Activated naive CD4-positive, alpha-beta T cell treated with anti-CD3 and anti-CD28 coated beads for 36 hours (primary cell): ENCODE measurements at regions of chr20 and their contacts with region 1.

Region 1: GRCh38 chr20:21125849-21126580 is at the start of gene KIZ:
- DNase-seq: peak; percentile 97
- H3K4me3 Mint-ChIP-seq: peak within 1 kb of the TSS; percentile 86
- H3K27ac Mint-ChIP-seq: peak within 1 kb of the TSS; percentile 73
- H3K4me1 Mint-ChIP-seq: peaks cover 14% of the 10 kb centered on the region
- H3K27me3 Mint-ChIP-seq: no peaks in the 10 kb centered on the region
- total RNA-seq, gene KIZ: 11.3 to 13.0 TPM

Region 2: GRCh38 chr20:20017001-20017843 is 1108.8 kb before region 1 on chr20 and contains the start of gene NAA20:
- CTCF ChIA-PET with region 1: no interaction called
- intact Hi-C with region 1: loop called (anchors 1 kb)
- DNase-seq: peak; percentile 93
- H3K4me3 Mint-ChIP-seq: peak within 1 kb of the TSS; percentile 88
- H3K27ac Mint-ChIP-seq: peak within 1 kb of the TSS; percentile 90
- H3K4me1 Mint-ChIP-seq: peaks cover 54% of the 10 kb centered on the region
- H3K27me3 Mint-ChIP-seq: no peaks in the 10 kb centered on the region
- total RNA-seq, gene NAA20: 59.5 to 65.5 TPM

Region 3: GRCh38 chr20:20052074-20052970 is 1073.7 kb before region 1 on chr20 and contains the starts of genes CFAP61 and CRNKL1:
- CTCF ChIA-PET with region 1: no interaction called
- intact Hi-C with region 1: loop called (anchors 10 kb)
- DNase-seq: peak; percentile 97
- H3K4me3 Mint-ChIP-seq: peak within 1 kb of the TSS; percentile 97
- H3K27ac Mint-ChIP-seq: peak within 1 kb of the TSS; percentile 96
- H3K4me1 Mint-ChIP-seq: peaks cover 14% of the 10 kb centered on the region
- H3K27me3 Mint-ChIP-seq: peaks cover 5% of the 10 kb centered on the region
- total RNA-seq, gene CFAP61: not detected
- total RNA-seq, gene CRNKL1: 14.1 to 15.7 TPM

Region 4: DNA sequence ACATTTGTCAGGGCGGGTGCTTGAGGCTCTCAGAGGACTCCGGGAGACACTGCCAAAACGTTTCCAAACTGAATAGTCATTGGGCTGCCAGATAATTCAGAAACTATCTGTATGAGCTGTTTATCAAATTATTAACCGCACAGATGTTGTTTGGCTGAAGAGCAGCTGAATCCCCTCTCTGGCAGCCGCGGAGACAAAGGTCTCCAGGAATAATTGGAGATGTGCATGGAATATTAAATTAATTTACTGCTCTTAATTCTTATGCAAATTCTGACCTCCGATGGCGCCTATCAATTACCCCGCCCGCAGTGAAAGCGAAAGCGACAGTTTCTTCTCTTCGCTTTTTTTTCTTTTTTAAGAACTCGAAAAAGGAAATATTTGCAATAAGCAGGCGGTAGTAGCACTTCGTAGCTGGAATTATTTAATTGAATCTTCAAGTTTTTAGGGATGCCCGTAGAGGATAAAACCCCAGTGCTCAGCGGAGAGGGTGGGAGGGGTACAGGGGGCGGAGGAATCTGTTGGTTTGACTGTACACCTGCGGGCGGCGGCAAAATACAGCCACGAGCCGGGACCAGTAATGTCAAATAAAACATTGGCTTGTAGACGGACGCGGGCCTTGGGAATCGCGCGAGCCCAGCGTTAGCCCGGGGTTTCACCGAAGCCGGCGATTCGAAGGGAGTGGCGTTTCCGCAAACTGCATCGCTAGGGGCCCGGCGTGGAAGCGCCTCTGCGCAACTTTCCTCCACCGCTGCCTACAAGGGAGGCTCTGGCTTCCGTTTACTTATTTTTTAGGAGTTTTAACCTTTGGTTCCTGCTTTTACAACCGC is 26.1 kb before region 1 on chr20:
- CTCF ChIA-PET with region 1: interaction called, 3 read pairs
- intact Hi-C with region 1: loop called (anchors 1 kb)
- DNase-seq: peak; percentile 65
- H3K4me3 Mint-ChIP-seq: peak overlapping the region; percentile 78
- H3K27ac Mint-ChIP-seq: no peak overlapping the region
- H3K4me1 Mint-ChIP-seq: peaks cover 32% of the 10 kb centered on the region
- H3K27me3 Mint-ChIP-seq: peaks cover 75% of the 10 kb centered on the region

Region 5: DNA sequence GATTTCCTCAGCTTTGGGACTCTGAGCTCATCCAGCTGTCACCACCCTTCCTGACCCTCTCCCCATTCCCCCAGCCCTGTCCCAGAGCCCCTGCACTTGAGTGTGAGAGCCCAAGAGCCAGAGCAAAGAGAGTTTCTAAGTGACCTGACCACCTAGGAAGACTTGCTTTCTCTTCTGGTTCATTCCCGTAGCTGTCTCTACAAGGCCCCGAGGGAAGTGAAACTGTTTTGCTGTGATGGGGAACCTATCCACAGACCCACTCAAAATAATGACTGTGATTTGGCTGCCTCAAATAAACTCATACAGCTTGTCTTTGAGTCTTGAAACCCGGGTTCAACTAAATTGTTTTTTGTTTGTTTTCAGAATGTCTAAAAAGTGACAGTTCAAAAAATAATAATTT is 102.5 kb after region 1 on chr20:
- CTCF ChIA-PET with region 1: no interaction called
- intact Hi-C with region 1: no loop called
- DNase-seq: no peak
- H3K4me3 Mint-ChIP-seq: no peak overlapping the region
- H3K27ac Mint-ChIP-seq: no peak overlapping the region
- H3K4me1 Mint-ChIP-seq: no peaks in the 10 kb centered on the region
- H3K27me3 Mint-ChIP-seq: no peaks in the 10 kb centered on the region

Region 6: DNA sequence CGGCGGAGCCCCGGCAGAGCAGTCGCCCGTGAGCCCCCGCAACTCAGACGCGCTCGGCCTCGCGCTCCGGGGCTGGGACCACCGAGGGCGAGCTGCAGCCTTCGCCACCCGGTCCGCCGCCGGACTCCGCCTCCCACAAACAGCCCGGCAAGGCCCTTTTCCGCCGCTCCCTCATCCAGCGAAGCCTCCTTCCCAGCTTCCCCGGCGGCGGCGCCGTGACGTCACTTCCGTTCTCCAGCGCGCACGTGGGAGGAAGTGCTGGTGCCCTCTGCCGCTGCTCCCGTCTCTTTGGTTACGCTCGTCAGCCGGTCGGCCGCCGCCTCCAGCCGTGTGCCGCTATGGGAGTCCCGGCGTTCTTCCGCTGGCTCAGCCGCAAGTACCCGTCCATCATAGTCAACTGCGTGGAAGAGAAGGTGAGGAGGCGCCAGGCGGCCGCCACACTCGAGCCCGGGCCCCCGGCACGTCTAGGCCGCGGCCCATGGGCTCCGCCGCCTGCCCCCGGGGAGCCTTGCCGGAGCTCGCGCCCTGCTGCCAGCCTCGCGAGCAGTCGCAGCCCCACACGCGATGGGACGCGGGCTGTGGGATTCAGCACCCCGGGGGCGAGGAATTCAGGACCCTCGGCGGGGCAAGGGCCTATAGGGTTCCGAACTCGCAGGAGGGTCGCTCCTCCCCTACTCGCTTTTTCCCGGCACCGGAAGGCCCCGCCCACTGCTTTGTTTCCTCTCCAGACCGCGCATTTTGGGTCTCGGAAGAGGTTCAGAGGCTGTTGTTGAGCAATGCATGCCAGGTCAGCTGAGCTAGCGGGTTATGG is 177.3 kb after region 1 on chr20 and contains the start of gene XRN2:
- CTCF ChIA-PET with region 1: no interaction called
- intact Hi-C with region 1: loop called (anchors 1 kb)
- DNase-seq: peak; percentile 96
- H3K4me3 Mint-ChIP-seq: peak within 1 kb of the TSS; percentile 94
- H3K27ac Mint-ChIP-seq: peak within 1 kb of the TSS; percentile 96
- H3K4me1 Mint-ChIP-seq: peaks cover 29% of the 10 kb centered on the region
- H3K27me3 Mint-ChIP-seq: no peaks in the 10 kb centered on the region
- total RNA-seq, gene XRN2: 76.5 to 81.9 TPM